Activated naive CD4-positive, alpha-beta T cell treated with anti-CD3 and anti-CD28 coated beads, Interleukin-2, amount 10 ng/mL, durations not matched to agents 7 days and 5 days (primary cell): ENCODE measurements at regions of chr15 and their contacts with region 1.

Region 1: DNA sequence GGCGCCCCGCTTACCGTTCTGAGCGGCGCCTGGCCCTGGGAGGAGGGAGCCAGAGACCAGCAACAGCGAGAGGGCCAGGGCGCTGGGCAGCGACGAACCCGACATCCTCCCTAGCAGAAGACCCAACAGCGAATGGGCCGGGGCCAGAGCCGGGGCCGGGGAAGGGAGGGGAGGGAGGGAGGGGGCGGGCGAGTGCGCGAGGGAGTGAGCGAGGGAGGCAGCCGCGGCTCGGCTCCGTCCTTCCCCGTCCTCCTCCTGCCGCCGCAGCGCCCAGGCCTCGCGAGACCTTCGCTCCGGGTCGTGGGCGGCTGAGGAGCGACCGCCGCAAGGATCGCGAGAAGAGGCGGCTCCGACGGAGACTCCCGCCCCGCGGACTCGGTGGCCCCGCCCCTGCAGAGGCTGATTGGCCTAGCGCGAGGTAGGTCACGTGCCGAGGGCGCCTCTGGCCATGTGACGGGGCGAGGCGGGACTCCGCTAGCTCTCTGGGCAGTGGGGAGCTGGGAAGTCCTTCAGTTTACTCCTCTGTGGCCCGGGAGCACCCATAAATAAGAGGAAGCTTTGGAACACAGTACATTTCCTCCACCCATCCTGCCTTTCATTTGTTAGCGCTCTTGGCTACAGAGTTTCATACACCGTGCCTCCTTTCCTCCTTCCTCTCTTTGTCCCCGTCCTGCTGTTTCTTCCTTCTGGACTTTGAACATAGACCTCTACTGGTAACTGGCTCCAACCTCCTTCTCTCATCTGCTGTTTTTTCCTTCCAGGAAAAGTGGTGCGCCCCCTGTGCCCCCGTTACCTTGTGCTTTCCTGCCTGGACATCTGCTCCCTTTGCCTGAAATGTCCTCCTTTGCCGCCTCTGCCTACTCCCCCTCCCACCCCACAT is at the start of gene NPTN:
- DNase-seq: peak; percentile 98
- H3K4me3 Mint-ChIP-seq: peak within 1 kb of the TSS; percentile 81
- H3K27ac Mint-ChIP-seq: peak within 1 kb of the TSS; percentile 78
- H3K4me1 Mint-ChIP-seq: peaks cover 37% of the 10 kb centered on the region
- H3K27me3 Mint-ChIP-seq: peaks cover 20% of the 10 kb centered on the region

Region 2: GRCh38 chr15:73305331-73306211 is 327.8 kb before region 1 on chr15:
- CTCF ChIA-PET with region 1: interaction called, 18 read pairs
- DNase-seq: peak; percentile 42
- H3K4me3 Mint-ChIP-seq: no peak overlapping the region
- H3K27ac Mint-ChIP-seq: no peak overlapping the region
- H3K4me1 Mint-ChIP-seq: no peaks in the 10 kb centered on the region
- H3K27me3 Mint-ChIP-seq: no peaks in the 10 kb centered on the region

Region 3: GRCh38 chr15:73571346-73571745 is 62.0 kb before region 1 on chr15:
- CTCF ChIA-PET with region 1: interaction called, 42 read pairs
- DNase-seq: no peak
- H3K4me3 Mint-ChIP-seq: no peak overlapping the region
- H3K27ac Mint-ChIP-seq: no peak overlapping the region
- H3K4me1 Mint-ChIP-seq: peaks cover 2% of the 10 kb centered on the region
- H3K27me3 Mint-ChIP-seq: no peaks in the 10 kb centered on the region

Region 4: GRCh38 chr15:73650416-73651126 is 17.2 kb after region 1 on chr15:
- CTCF ChIA-PET with region 1: interaction called, 14 read pairs
- DNase-seq: no peak
- H3K4me3 Mint-ChIP-seq: no peak overlapping the region
- H3K27ac Mint-ChIP-seq: no peak overlapping the region
- H3K4me1 Mint-ChIP-seq: peaks cover 2% of the 10 kb centered on the region
- H3K27me3 Mint-ChIP-seq: peaks cover 8% of the 10 kb centered on the region

Region 5: GRCh38 chr15:73691396-73691795 is 58.0 kb after region 1 on chr15:
- CTCF ChIA-PET with region 1: interaction called, 275 read pairs
- DNase-seq: no peak
- H3K4me3 Mint-ChIP-seq: no peak overlapping the region
- H3K27ac Mint-ChIP-seq: no peak overlapping the region
- H3K4me1 Mint-ChIP-seq: peaks cover 5% of the 10 kb centered on the region
- H3K27me3 Mint-ChIP-seq: peaks cover 67% of the 10 kb centered on the region

Region 6: GRCh38 chr15:73704869-73705645 is 71.7 kb after region 1 on chr15:
- CTCF ChIA-PET with region 1: interaction called, 275 read pairs
- DNase-seq: peak; percentile 80
- H3K4me3 Mint-ChIP-seq: no peak overlapping the region
- H3K27ac Mint-ChIP-seq: no peak overlapping the region
- H3K4me1 Mint-ChIP-seq: peaks cover 4% of the 10 kb centered on the region
- H3K27me3 Mint-ChIP-seq: peaks cover 38% of the 10 kb centered on the region

Region 7: GRCh38 chr15:73732930-73733329 is 99.6 kb after region 1 on chr15:
- CTCF ChIA-PET with region 1: no interaction called
- DNase-seq: no peak
- H3K4me3 Mint-ChIP-seq: no peak overlapping the region
- H3K27ac Mint-ChIP-seq: no peak overlapping the region
- H3K4me1 Mint-ChIP-seq: no peaks in the 10 kb centered on the region
- H3K27me3 Mint-ChIP-seq: peaks cover 7% of the 10 kb centered on the region